IMR-90 (cell line): ENCODE measurements at regions of chr9 and their contacts with region 1.

Region 1: DNA sequence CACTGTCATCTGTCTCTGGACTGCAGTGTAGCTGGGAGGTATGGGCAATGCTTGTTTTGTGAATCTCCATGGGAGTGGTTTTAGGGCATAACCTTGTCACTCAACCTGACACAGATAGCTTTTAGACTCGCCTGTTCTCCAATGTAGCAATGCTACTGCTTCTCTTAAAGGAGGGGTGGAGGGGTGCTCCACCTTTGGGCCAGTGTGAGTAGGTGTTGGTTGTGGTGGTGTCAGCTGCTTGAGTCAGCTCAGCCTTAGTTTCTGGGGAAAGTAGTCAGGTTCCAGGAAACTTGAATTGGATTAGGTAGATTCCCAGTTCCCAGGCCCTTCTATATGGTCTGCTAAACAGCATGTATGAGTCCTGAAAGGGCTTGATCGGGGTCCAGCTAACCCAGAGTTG is 91.2 kb upstream of the PLPPR1 start:
- DNase-seq: no peak
- ATAC-seq: no peak
- H3K4me3 ChIP-seq: no peak overlapping the region
- H3K27ac ChIP-seq: no peak overlapping the region
- H3K4me1 ChIP-seq: no peaks in the 10 kb centered on the region
- H3K27me3 ChIP-seq: no peaks in the 10 kb centered on the region
- CTCF ChIP-seq: no peak
- POLR2A ChIP-seq: no peak
- RAD21 ChIP-seq: no peak

Region 2: GRCh38 chr9:100756221-100756620 is 181.2 kb before region 1 on chr9:
- CTCF ChIA-PET with region 1: no interaction called
- POLR2A ChIA-PET with region 1: no interaction called
- dilution Hi-C with region 1: no loop called
- in situ Hi-C with region 1: no loop called
- intact Hi-C with region 1: no loop called
- DNase-seq: no peak
- ATAC-seq: no peak
- H3K4me3 ChIP-seq: no peak overlapping the region
- H3K27ac ChIP-seq: no peak overlapping the region
- H3K4me1 ChIP-seq: no peaks in the 10 kb centered on the region
- H3K27me3 ChIP-seq: no peaks in the 10 kb centered on the region
- CTCF ChIP-seq: no peak
- POLR2A ChIP-seq: no peak
- RAD21 ChIP-seq: no peak

Region 3: DNA sequence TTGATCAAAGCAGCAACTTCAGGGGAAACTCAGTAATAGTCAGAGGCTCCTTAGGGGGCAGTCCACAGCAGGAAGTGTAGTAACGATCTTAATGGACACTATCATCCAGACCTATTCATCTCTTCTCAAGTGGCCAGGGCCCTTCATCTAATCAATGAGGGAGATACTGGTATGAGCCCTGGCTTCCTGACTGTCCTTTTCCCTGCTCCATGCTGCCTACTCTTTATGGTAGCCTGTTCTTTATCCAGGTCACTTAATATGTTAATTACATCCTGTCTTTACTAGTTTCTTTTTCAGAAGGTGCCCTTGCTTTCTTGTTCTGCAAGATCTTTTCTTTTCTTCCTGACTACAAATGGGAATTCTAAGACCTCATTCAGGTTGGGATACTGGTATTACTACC is 162.4 kb before region 1 on chr9:
- CTCF ChIA-PET with region 1: no interaction called
- POLR2A ChIA-PET with region 1: no interaction called
- dilution Hi-C with region 1: no loop called
- in situ Hi-C with region 1: no loop called
- intact Hi-C with region 1: loop called (anchors 10 kb)
- DNase-seq: no peak
- ATAC-seq: no peak
- H3K4me3 ChIP-seq: no peak overlapping the region
- H3K27ac ChIP-seq: no peak overlapping the region
- H3K4me1 ChIP-seq: no peaks in the 10 kb centered on the region
- H3K27me3 ChIP-seq: no peaks in the 10 kb centered on the region
- CTCF ChIP-seq: no peak
- POLR2A ChIP-seq: no peak
- RAD21 ChIP-seq: no peak